Left lung (tissue), 14 donors: ENCODE measurements at regions of chr1 and their contacts with region 1.

Region 1: GRCh38 chr1:184992271-184992670 is 18.0 kb upstream of the NIBAN1 start:
- DNase-seq: no peak
- ATAC-seq: no peak
- H3K4me3 ChIP-seq: no peak overlapping the region
- H3K27ac ChIP-seq: no peak overlapping the region
- H3K4me1 ChIP-seq: peaks cover 0 to 8% of the 10 kb centered on the region in 2 donors
- H3K27me3 ChIP-seq: no peaks in the 10 kb centered on the region
- CTCF ChIP-seq: no peak

Region 2: GRCh38 chr1:184892116-184892515 is 100.2 kb before region 1 on chr1:
- intact Hi-C with region 1: no loop called
- DNase-seq: no peak
- ATAC-seq: no peak
- H3K4me3 ChIP-seq: no peak overlapping the region
- H3K27ac ChIP-seq: peak overlapping the region in 1 of 2 donors; percentile 57
- H3K4me1 ChIP-seq: peaks cover 5 to 15% of the 10 kb centered on the region in 2 donors
- H3K27me3 ChIP-seq: no peaks in the 10 kb centered on the region
- CTCF ChIP-seq: no peak

Region 3: DNA sequence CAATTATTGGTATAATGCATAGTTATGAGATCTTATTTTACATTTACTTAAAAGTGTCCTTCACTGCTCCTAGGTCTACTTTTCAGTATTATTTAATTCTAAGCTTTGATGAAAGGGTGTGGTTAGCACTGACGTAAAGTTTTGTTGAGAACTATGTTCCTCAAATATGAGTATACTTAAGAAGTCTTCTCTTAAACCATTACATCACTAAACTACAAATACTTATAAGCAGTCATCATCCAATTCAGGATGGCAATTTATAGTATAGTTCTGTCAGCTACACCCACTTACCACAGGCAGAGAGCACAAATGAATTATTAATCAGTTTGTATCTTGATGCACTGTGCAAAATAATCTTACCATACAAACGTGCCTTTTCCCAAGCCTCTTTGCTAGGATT is 137.4 kb after region 1 on chr1:
- intact Hi-C with region 1: no loop called
- DNase-seq: no peak
- ATAC-seq: peak; percentile 71
- H3K4me3 ChIP-seq: no peak overlapping the region
- H3K27ac ChIP-seq: no peak overlapping the region
- H3K4me1 ChIP-seq: no peaks in the 10 kb centered on the region
- H3K27me3 ChIP-seq: no peaks in the 10 kb centered on the region
- CTCF ChIP-seq: no peak

Region 4: GRCh38 chr1:185159966-185160365 is 167.7 kb after region 1 on chr1:
- intact Hi-C with region 1: loop called in 1 of 2 experiments (anchors 10 kb)
- DNase-seq: no peak
- ATAC-seq: no peak
- H3K4me3 ChIP-seq: no peak overlapping the region
- H3K27ac ChIP-seq: no peak overlapping the region
- H3K4me1 ChIP-seq: peaks cover 9 to 24% of the 10 kb centered on the region in 2 donors
- H3K27me3 ChIP-seq: no peaks in the 10 kb centered on the region
- CTCF ChIP-seq: no peak